CD4-positive, alpha-beta T cell (primary cell): ENCODE measurements at regions of chr3 and their contacts with region 1.

Region 1: DNA sequence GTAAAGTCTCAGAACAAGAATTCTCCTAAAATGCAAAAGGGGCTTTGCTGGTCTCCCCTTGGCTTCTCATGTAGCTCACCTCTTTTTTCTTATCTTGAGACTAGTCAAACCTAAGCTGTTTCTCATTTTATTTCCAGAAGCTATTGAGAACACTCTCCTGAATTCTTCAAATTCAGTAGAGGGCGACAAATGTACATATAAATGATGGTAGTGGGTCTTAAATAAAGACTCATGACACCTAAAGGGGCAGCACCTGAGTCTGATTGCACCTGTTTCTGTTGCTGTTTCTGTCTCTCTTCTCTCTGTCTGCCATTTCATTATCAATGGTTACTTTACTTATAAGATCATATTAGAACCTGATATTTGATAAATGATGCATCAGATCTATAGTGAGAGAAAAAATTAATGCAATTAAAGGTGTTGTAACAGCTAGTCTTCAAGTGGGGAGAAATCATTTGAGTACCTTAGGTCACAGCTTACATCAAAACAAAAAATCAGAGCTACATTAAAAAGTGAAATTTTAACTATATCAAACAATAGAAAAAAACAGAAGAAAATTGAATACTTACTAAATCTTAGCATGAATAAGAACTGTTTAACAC is 7.0 kb downstream of the ADIPOQ start:
- DNase-seq: peak in 4 of 14 experiments; percentile 24 to 81 (median 76)
- ATAC-seq: peak; percentile 99
- H3K4me3 ChIP-seq: no peak overlapping the region
- H3K4me3 Mint-ChIP-seq: no peak overlapping the region
- H3K27ac ChIP-seq: no peak overlapping the region
- H3K27ac Mint-ChIP-seq: peak overlapping the region; percentile 1
- H3K4me1 ChIP-seq: peaks cover 3% of the 10 kb centered on the region
- H3K4me1 Mint-ChIP-seq: peaks cover 12% of the 10 kb centered on the region
- H3K27me3 ChIP-seq: peaks cover 0 to 4% of the 10 kb centered on the region in 2 experiments
- H3K27me3 Mint-ChIP-seq: peaks cover 5% of the 10 kb centered on the region
- CTCF ChIP-seq: peak; percentile 75

Region 2: GRCh38 chr3:186909078-186909853 is 59.8 kb after region 1 on chr3:
- CTCF ChIA-PET with region 1: interaction called, 4 read pairs
- POLR2A ChIA-PET with region 1: interaction called, 17 read pairs
- intact Hi-C with region 1: no loop called
- DNase-seq: peak; percentile 68 to 93 (median 82)
- ATAC-seq: peak; percentile 93
- H3K4me3 ChIP-seq: peak overlapping the region; percentile 33
- H3K4me3 Mint-ChIP-seq: peak overlapping the region; percentile 81
- H3K27ac ChIP-seq: peak overlapping the region; percentile 64 to 69
- H3K27ac Mint-ChIP-seq: peak overlapping the region; percentile 98
- H3K4me1 ChIP-seq: peaks cover 29% of the 10 kb centered on the region
- H3K4me1 Mint-ChIP-seq: peaks cover 44% of the 10 kb centered on the region
- H3K27me3 ChIP-seq: no peaks in the 10 kb centered on the region
- H3K27me3 Mint-ChIP-seq: no peaks in the 10 kb centered on the region
- CTCF ChIP-seq: no peak

Region 3: DNA sequence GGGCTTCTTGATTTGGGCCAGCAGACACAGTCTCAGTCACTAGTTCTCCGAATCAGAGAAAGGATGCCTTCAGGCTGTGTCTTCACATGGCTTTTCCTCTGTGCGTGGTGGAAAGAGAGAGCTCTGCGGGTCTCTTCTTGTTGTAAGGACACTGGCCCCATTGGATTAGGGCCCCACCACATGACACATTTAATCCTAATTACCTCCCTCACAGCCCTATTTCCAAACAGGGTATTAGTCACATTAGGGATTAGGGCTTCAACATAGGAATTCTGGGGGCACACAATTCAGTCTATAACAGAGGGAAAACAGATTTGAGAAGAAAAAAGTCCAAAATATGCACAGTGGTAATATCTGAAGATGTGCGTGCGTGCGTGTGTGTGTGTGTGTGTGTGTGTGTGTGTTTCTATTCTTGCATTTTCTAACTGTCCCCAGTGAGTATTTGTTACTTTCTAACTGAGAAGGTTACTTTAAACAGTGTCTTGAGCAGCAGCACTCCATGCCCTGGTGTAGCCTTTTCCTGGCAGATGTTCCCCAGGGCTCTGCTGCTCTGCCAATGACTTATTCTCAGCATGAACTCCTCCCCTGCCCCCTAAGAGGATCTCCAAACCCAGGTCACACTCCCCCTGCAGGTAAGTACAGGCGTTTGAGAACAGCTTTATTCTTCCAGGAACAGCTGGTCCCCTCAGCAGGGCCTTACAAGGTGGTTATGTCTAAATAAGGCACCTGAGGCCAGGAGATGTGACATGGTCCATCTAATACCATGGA is 216.9 kb after region 1 on chr3:
- CTCF ChIA-PET with region 1: interaction called, 8 read pairs
- POLR2A ChIA-PET with region 1: interaction called, 3 read pairs
- intact Hi-C with region 1: loop called (anchors 1 to 2 kb)
- DNase-seq: peak in 13 of 14 experiments; percentile 31 to 78 (median 45)
- ATAC-seq: peak; percentile 91
- H3K4me3 ChIP-seq: no peak overlapping the region
- H3K4me3 Mint-ChIP-seq: peak overlapping the region; percentile 12
- H3K27ac ChIP-seq: no peak overlapping the region
- H3K27ac Mint-ChIP-seq: peak overlapping the region; percentile 86
- H3K4me1 ChIP-seq: peaks cover 45% of the 10 kb centered on the region
- H3K4me1 Mint-ChIP-seq: peaks cover 74% of the 10 kb centered on the region
- H3K27me3 ChIP-seq: no peaks in the 10 kb centered on the region
- H3K27me3 Mint-ChIP-seq: no peaks in the 10 kb centered on the region
- CTCF ChIP-seq: peak; percentile 38

Region 4: DNA sequence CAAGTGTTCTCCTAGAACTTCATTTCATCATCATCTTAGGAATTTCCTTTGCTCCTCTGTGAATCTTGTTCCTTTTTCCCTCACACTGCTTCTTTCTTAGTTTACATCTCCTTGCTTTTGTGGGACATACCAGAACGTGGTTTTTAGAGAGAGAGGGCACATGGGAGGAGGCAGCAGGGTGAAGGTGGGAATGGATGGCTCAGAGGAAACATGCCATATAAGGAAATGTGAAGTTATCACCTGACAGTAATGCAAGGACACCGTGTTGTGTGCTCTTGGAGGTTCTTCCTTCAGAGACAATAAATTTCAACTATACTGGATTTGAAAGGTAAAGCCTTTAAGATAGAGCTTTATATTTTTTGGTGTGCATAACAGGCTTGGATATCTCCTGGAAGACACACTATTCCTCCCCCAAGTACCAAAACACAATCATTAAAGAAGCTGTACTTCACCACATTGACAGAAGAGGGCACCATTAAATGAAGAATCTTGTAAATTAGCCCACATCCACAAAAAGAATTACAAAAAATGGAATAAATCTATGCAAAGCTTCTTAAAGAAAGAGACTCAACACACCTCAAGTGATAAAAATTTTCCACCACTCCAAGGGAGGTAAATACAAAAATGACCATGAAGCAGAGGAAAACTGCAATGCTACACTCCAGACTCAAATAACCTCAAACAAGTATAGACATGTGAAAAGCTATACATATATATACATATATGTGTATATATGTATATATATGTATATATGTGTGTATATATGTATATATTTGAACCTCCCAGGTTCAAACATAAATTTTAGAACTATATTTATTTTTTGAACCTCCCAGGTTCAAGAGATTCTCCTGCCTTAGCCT is 263.7 kb after region 1 on chr3:
- CTCF ChIA-PET with region 1: interaction called, 17 read pairs
- POLR2A ChIA-PET with region 1: interaction called, 3 read pairs
- intact Hi-C with region 1: loop called in 1 of 2 experiments (anchors 5 kb)
- DNase-seq: peak in 3 of 14 experiments; percentile 58 to 72 (median 68)
- ATAC-seq: peak; percentile 63
- H3K4me3 ChIP-seq: no peak overlapping the region
- H3K4me3 Mint-ChIP-seq: no peak overlapping the region
- H3K27ac ChIP-seq: no peak overlapping the region
- H3K27ac Mint-ChIP-seq: no peak overlapping the region
- H3K4me1 ChIP-seq: peaks cover 2% of the 10 kb centered on the region
- H3K4me1 Mint-ChIP-seq: peaks cover 8% of the 10 kb centered on the region
- H3K27me3 ChIP-seq: no peaks in the 10 kb centered on the region
- H3K27me3 Mint-ChIP-seq: no peaks in the 10 kb centered on the region
- CTCF ChIP-seq: peak; percentile 86

Region 5: GRCh38 chr3:187150599-187150998 is 301.1 kb after region 1 on chr3:
- CTCF ChIA-PET with region 1: interaction called, 13 read pairs
- POLR2A ChIA-PET with region 1: no interaction called
- intact Hi-C with region 1: no loop called
- DNase-seq: peak; percentile 36 to 76 (median 60)
- ATAC-seq: peak; percentile 55
- H3K4me3 ChIP-seq: no peak overlapping the region
- H3K4me3 Mint-ChIP-seq: no peak overlapping the region
- H3K27ac ChIP-seq: no peak overlapping the region
- H3K27ac Mint-ChIP-seq: no peak overlapping the region
- H3K4me1 ChIP-seq: no peaks in the 10 kb centered on the region
- H3K4me1 Mint-ChIP-seq: peaks cover 8% of the 10 kb centered on the region
- H3K27me3 ChIP-seq: peaks cover 0 to 2% of the 10 kb centered on the region in 2 experiments
- H3K27me3 Mint-ChIP-seq: no peaks in the 10 kb centered on the region
- CTCF ChIP-seq: peak; percentile 34

Region 6: DNA sequence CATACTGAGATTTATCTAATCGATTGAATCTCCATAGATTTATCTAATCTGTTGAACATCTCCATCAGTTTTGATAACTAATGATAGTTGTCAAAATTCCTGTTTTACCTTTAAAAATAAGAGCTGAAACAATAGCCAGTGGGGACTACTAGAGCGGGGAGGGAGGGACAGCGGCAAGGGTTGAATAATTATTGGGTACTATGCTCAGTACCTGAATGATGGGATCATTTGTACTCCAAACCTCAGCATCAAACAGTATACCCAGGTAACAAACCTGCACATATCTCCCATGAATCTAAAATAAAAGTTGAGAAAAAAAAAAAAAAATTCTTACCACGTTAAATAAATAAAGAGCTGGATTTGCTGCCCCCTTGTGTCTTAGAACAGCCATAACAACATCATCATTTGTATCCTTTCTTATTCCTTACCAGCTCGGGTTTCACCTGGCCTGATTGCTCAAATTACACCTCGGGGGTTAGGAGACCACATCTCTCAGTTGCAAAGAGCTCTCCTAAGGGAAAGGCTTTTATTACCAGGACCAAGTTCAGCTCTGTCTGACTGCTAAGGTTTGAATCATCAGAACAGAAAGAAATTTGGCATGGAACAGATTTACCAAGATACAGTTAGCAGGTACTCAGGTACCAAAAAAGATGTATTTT is 315.5 kb after region 1 on chr3:
- CTCF ChIA-PET with region 1: interaction called, 23 read pairs
- POLR2A ChIA-PET with region 1: interaction called, 15 read pairs
- intact Hi-C with region 1: loop called (anchors 1 kb)
- DNase-seq: peak in 10 of 14 experiments; percentile 3 to 84 (median 28)
- ATAC-seq: peak; percentile 81
- H3K4me3 ChIP-seq: no peak overlapping the region
- H3K4me3 Mint-ChIP-seq: no peak overlapping the region
- H3K27ac ChIP-seq: no peak overlapping the region
- H3K27ac Mint-ChIP-seq: no peak overlapping the region
- H3K4me1 ChIP-seq: peaks cover 5% of the 10 kb centered on the region
- H3K4me1 Mint-ChIP-seq: peaks cover 11% of the 10 kb centered on the region
- H3K27me3 ChIP-seq: no peaks in the 10 kb centered on the region
- H3K27me3 Mint-ChIP-seq: no peaks in the 10 kb centered on the region
- CTCF ChIP-seq: peak; percentile 82

Region 7: DNA sequence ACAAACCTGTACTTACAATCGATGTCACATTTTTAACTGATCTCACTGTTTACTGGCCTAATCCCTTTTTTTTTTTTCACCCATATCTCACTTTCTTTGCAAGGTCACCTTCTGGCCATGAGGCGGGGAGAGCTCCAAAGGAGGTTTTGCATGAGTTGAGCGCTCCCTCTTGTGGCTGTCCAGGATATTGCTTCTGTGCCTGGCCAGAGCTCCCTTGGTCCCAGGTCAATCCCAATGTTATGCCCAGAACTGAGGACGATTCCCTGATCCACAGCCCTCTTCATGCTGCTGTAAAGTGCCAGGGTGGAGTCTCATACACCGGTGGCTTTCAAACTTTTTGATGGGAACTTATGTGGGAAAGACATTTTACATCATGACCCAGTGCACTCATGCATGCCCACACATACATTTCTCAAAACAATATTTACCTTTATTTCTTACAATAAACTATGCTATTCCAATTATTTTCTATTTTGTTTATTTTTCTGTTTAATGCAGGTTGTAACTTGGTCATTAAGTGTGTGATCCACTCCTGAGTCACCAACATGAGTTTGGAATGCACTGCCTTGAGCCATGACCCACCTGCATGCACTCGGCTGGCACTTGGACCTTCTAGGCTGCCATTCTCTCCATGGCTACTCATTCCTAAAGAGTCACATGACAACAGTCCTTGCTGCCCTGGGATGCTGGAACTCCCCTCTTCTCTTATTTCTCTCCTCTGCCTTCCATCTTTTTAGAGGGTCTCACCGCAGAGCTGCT is 830.3 kb after region 1 on chr3:
- CTCF ChIA-PET with region 1: no interaction called
- POLR2A ChIA-PET with region 1: no interaction called
- intact Hi-C with region 1: loop called in 1 of 2 experiments (anchors 10 kb)
- DNase-seq: peak; percentile 39 to 76 (median 56)
- ATAC-seq: no peak
- H3K4me3 ChIP-seq: no peak overlapping the region
- H3K4me3 Mint-ChIP-seq: no peak overlapping the region
- H3K27ac ChIP-seq: no peak overlapping the region
- H3K27ac Mint-ChIP-seq: no peak overlapping the region
- H3K4me1 ChIP-seq: no peaks in the 10 kb centered on the region
- H3K4me1 Mint-ChIP-seq: no peaks in the 10 kb centered on the region
- H3K27me3 ChIP-seq: peaks cover 5 to 6% of the 10 kb centered on the region in 2 experiments
- H3K27me3 Mint-ChIP-seq: peaks cover 62% of the 10 kb centered on the region
- CTCF ChIP-seq: peak; percentile 94